Panc1 (cell line): ENCODE measurements at regions of chr4 and their contacts with region 1.

Region 1: DNA sequence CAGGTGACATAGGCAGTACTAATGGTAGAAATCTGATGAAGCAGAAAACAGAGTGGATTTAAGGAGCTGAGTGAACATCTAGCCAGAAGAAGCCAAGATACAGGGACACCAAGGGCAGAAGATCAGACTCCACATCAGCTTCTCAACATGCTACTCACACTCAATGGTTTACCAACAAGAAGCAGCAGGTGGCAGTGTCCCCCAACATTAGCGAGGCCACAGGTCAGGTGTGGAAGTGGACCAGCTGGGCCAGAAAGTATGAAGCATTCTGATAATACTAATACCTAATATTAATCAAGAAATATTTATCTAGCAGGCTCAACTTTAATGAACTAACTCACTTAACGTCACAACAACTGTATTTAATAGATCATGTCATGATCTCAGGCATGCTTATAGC is 73.4 kb upstream of the TTC29 start:
- DNase-seq: peak; percentile 17
- ATAC-seq: peak; percentile 80
- H3K4me3 ChIP-seq: no peak overlapping the region
- H3K27ac ChIP-seq: no peak overlapping the region
- H3K4me1 ChIP-seq: no peaks in the 10 kb centered on the region
- H3K27me3 ChIP-seq: no peaks in the 10 kb centered on the region
- CTCF ChIP-seq: peak; percentile 70

Region 2: GRCh38 chr4:147037069-147037468 is 18.0 kb after region 1 on chr4:
- CTCF ChIA-PET with region 1: no interaction called
- POLR2A ChIA-PET with region 1: no interaction called
- in situ Hi-C with region 1: no loop called
- intact Hi-C with region 1: no loop called
- DNase-seq: no peak
- ATAC-seq: no peak
- H3K4me3 ChIP-seq: no peak overlapping the region
- H3K27ac ChIP-seq: no peak overlapping the region
- H3K4me1 ChIP-seq: no peaks in the 10 kb centered on the region
- H3K27me3 ChIP-seq: no peaks in the 10 kb centered on the region; the same call in 1 of the 2 replicates
- CTCF ChIP-seq: no peak

Region 3: GRCh38 chr4:147096667-147097604 is 77.9 kb after region 1 on chr4:
- CTCF ChIA-PET with region 1: interaction called, 8 read pairs
- POLR2A ChIA-PET with region 1: no interaction called
- in situ Hi-C with region 1: no loop called
- intact Hi-C with region 1: loop called (anchors 1 kb)
- DNase-seq: no peak
- ATAC-seq: no peak
- H3K4me3 ChIP-seq: no peak overlapping the region
- H3K27ac ChIP-seq: no peak overlapping the region
- H3K4me1 ChIP-seq: no peaks in the 10 kb centered on the region
- H3K27me3 ChIP-seq: no peaks in the 10 kb centered on the region
- CTCF ChIP-seq: peak; percentile 50; the same call in 1 of the 2 replicates